ENCODE measurements at regions of chr1 and their contacts with region 1.

Region 1: DNA sequence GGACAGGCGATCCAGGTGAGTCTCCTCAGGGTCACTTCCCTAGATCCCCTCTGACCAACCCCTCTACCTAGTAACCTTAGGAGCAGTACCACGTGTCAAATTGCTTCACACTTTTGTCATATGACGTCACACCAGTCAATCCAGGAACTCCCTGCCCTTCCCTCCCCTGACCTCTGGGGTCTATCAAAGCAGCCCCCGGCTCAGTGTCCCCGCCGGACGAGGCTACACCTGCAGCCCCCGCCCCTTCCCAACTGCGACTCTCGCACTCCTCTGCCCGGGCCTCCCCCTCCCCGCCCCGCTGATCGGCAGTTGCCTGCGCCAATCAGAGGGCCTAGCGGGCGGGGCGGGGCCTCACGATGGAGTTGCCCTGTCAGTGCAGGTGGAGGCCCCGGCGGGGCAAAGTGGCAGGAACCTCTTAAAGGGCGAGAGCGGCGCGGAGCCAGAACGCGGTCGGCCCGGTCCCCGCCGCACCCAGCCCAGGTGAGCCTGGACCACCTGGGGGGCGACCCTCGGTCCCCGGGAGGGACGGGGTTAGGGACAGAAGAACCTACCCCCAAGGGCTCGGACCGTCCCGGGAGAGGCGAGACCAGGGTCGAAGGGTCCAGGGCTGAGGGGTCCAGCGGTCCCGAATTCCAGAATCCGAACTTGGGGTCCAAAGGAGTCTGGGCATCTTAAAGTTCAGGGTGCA is 27.5 kb upstream of the EPB41 start:
- DNase-seq: peak; percentile 99
- CTCF ChIP-seq: no peak

Region 2: DNA sequence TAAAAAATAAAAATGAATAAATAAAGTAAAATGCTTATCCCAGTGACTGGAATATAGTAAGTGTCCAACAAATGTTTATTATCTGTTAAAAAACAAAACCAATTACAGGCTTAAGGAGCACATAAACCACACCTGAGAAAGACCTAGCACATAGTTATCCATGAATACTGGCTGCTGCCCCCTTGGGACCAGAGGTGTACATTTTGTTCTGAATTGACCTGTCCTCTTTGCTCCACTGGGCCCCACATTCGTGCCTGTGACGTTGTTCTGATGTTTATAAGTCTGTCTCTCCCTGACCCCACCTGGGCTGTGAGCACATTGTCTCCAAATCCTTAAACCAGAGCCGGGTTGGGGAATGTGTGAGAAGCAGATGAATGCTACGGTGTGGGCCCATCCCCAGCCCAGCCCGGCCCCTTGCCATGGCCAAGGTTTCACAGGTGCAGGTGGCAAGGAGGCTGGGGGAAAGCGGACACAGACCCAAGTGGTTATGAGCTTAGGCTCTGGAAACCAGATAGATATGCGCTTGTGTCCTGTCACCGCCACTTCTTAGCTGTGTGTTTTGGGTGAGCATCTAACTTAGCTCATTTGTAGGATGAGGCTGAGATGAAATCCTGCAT is 45.8 kb before region 1 on chr1:
- CTCF ChIA-PET with region 1: no interaction called
- POLR2A ChIA-PET with region 1: no interaction called
- DNase-seq: no peak
- CTCF ChIP-seq: no peak

Region 3: DNA sequence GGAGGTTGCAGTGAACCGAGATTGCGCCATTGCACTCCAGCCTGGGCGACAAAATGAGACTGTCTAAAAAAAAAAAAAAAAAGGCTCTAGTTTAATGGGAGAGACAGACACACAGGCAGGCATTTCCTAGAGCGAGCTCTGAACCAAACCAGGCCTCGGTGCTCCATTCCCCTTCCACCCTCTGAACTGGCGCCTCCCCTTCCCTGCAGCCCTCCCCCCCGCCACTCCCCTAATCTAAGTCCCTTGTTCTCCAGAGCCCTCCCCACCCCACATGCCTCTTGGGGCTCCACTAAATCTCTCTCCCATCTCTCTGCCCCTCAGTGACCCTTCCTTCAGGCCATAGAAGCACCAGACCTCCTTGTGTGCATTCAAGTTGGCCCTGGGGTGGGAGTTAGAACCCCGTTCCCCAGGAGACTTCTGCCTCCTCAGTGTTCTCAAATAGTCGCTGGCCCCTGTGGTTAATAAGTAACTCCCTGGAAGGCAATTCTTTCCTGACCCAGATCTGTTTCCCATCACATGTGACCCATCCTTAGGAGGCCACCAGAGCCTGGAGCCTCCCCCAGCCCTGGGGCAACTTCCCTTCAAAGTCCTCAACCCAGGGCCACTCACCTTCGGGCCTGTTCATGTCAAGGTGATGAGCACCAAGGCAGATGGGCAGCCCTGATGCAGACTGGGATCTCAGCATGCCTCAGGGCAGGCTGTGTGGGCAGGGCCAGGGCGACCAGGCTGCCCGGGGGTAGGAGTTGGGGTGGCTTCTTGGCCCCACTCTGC is 15.1 kb before region 1 on chr1:
- CTCF ChIA-PET with region 1: interaction called, 29 read pairs
- POLR2A ChIA-PET with region 1: no interaction called
- DNase-seq: no peak
- CTCF ChIP-seq: no peak

Region 4: DNA sequence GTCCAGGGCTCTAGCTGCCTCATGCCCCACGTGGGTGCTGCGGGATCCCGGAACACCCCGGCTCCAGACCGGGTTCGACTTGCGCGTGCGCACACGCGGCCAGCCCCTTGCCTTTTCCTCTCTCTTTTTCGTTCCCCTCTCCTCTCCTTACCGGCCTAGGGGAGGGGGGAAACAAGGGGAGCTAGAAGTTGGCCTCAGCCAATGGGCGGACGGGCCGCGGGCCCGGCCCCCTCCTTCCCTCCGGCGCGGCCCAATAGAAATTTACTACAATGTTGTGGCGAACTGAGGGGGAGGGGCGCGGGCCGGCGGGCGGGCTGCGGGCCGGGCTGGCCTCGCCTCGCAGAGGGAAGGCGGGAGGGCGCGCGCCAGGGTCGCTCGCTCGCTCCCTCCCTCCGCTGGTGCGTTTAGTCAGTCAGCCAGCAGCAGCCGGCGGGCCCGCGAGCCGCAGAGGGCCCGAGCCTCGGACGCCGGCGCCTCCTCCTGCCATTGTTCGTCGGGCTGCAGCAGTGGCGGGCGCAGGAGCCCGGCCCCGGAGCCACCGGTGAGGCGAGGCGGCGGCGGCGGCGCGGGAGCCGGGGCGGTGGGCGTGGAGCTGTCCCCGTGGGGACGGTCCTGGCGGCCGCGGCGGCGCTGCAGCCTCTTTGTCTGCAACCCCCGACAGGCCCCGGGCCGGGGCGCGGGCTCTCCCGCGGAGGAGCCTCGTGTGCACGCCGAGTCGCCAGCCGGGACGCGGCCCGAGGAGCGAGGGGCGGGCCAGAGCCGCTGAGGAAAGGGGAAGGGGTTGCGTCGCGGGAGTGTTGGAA is 27.6 kb after region 1 on chr1 and contains the start of gene EPB41:
- CTCF ChIA-PET with region 1: interaction called, 10 read pairs
- POLR2A ChIA-PET with region 1: no interaction called
- DNase-seq: peak; percentile 96
- CTCF ChIP-seq: no peak

Region 5: GRCh38 chr1:29043274-29043965 is 156.5 kb after region 1 on chr1:
- CTCF ChIA-PET with region 1: interaction called, 11 read pairs
- POLR2A ChIA-PET with region 1: no interaction called
- DNase-seq: no peak
- CTCF ChIP-seq: no peak

Region 6: GRCh38 chr1:29197585-29197924 is 310.7 kb after region 1 on chr1:
- CTCF ChIA-PET with region 1: interaction called, 70 read pairs
- POLR2A ChIA-PET with region 1: no interaction called
- DNase-seq: peak; percentile 37
- CTCF ChIP-seq: peak; percentile 38